MCF 10A (cell line): ENCODE measurements at regions of chr12 and their contacts with region 1.

Region 1: GRCh38 chr12:8834230-8834629 is 11.8 kb downstream of the A2ML1 start:
- DNase-seq: no peak
- H3K4me3 Mint-ChIP-seq: no peak overlapping the region
- H3K27ac Mint-ChIP-seq: no peak overlapping the region
- H3K4me1 Mint-ChIP-seq: no peaks in the 10 kb centered on the region
- H3K27me3 Mint-ChIP-seq: no peaks in the 10 kb centered on the region
- CTCF ChIP-seq: no peak

Region 2: GRCh38 chr12:8600006-8600405 is 234.2 kb before region 1 on chr12:
- CTCF ChIA-PET with region 1: no interaction called
- POLR2A ChIA-PET with region 1: no interaction called
- intact Hi-C with region 1: no loop called
- DNase-seq: no peak
- H3K4me3 Mint-ChIP-seq: no peak overlapping the region
- H3K27ac Mint-ChIP-seq: no peak overlapping the region
- H3K4me1 Mint-ChIP-seq: no peaks in the 10 kb centered on the region
- H3K27me3 Mint-ChIP-seq: peaks cover 14% of the 10 kb centered on the region
- CTCF ChIP-seq: no peak

Region 3: GRCh38 chr12:8849876-8850275 is 15.6 kb after region 1 on chr12:
- CTCF ChIA-PET with region 1: no interaction called
- POLR2A ChIA-PET with region 1: no interaction called
- intact Hi-C with region 1: no loop called
- DNase-seq: peak; percentile 42
- H3K4me3 Mint-ChIP-seq: no peak overlapping the region
- H3K27ac Mint-ChIP-seq: no peak overlapping the region
- H3K4me1 Mint-ChIP-seq: no peaks in the 10 kb centered on the region
- H3K27me3 Mint-ChIP-seq: no peaks in the 10 kb centered on the region
- CTCF ChIP-seq: no peak

Region 4: GRCh38 chr12:8876887-8877286 is 42.7 kb after region 1 on chr12:
- CTCF ChIA-PET with region 1: no interaction called
- POLR2A ChIA-PET with region 1: no interaction called
- intact Hi-C with region 1: loop called (anchors 1 kb)
- DNase-seq: no peak
- H3K4me3 Mint-ChIP-seq: no peak overlapping the region
- H3K27ac Mint-ChIP-seq: no peak overlapping the region
- H3K4me1 Mint-ChIP-seq: no peaks in the 10 kb centered on the region
- H3K27me3 Mint-ChIP-seq: no peaks in the 10 kb centered on the region
- CTCF ChIP-seq: no peak

Region 5: GRCh38 chr12:9064201-9064814 is 230.1 kb after region 1 on chr12:
- CTCF ChIA-PET with region 1: no interaction called
- POLR2A ChIA-PET with region 1: no interaction called
- intact Hi-C with region 1: no loop called
- DNase-seq: peak; percentile 71
- H3K4me3 Mint-ChIP-seq: peak overlapping the region; percentile 79
- H3K27ac Mint-ChIP-seq: peak overlapping the region; percentile 79
- H3K4me1 Mint-ChIP-seq: peaks cover 13% of the 10 kb centered on the region
- H3K27me3 Mint-ChIP-seq: no peaks in the 10 kb centered on the region
- CTCF ChIP-seq: peak; percentile 38

Region 6: DNA sequence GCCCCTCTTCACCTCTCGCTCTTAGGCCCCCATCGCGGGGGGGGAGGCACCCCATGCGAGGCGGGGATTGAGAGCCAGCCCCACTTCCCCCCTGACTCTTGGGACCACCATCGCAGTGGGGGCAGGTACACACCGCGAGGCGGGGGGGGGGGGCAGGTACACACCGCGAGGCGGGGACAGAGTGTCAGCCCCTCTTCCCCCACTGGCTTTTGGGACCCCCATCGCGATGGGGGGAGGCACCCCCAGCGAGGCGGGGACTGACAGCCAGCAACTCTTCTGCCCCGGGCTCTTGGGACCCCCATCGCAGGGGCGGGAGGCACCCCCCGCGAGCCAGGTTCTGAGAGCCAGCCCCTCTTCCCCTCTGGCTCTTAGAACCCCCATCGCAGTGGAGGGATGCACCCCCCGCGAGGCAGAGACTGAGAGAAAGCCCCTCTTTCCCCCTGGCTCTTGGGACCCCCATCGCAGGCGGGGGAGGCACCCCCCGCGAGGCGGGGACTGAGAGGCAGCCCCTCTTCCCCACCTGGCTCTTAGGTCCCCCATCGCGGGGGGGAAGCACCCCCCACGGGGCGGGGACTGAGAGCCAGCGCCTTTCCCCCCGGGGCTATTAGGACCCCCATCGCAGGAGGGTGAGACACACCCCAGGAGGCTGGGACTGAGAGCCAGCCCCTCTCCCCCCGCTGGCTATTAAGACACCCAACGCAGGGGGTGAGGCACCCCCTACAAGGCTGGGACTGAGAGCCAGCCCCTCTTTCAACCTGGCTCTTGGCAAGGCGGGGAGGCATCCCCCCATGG is 570.4 kb after region 1 on chr12:
- CTCF ChIA-PET with region 1: no interaction called
- POLR2A ChIA-PET with region 1: no interaction called
- intact Hi-C with region 1: no loop called
- DNase-seq: no peak
- H3K4me3 Mint-ChIP-seq: no peak overlapping the region
- H3K27ac Mint-ChIP-seq: no peak overlapping the region
- H3K4me1 Mint-ChIP-seq: no peaks in the 10 kb centered on the region
- H3K27me3 Mint-ChIP-seq: no peaks in the 10 kb centered on the region
- CTCF ChIP-seq: no peak